ENCODE measurements at regions of chr10 and their contacts with region 1.

Region 1: GRCh38 chr10:26334932-26335573 is 103.1 kb upstream of the APBB1IP start:
- DNase-seq: peak; percentile 81
- H3K4me3 ChIP-seq: no peak overlapping the region
- H3K27ac ChIP-seq: no peak overlapping the region
- H3K4me1 ChIP-seq: no peaks in the 10 kb centered on the region
- H3K27me3 ChIP-seq: no peaks in the 10 kb centered on the region
- CTCF ChIP-seq: peak; percentile 87

Region 2: GRCh38 chr10:25036381-25036780 is 1298.7 kb before region 1 on chr10:
- CTCF ChIA-PET with region 1: no interaction called
- POLR2A ChIA-PET with region 1: no interaction called
- intact Hi-C with region 1: no loop called
- DNase-seq: no peak
- H3K4me3 ChIP-seq: no peak overlapping the region
- H3K27ac ChIP-seq: no peak overlapping the region
- H3K4me1 ChIP-seq: no peaks in the 10 kb centered on the region
- H3K27me3 ChIP-seq: no peaks in the 10 kb centered on the region
- CTCF ChIP-seq: no peak

Region 3: GRCh38 chr10:26725837-26726727 is 391.0 kb after region 1 on chr10:
- CTCF ChIA-PET with region 1: no interaction called
- POLR2A ChIA-PET with region 1: no interaction called
- intact Hi-C with region 1: loop called (anchors 5 kb)
- DNase-seq: peak; percentile 71
- H3K4me3 ChIP-seq: no peak overlapping the region
- H3K27ac ChIP-seq: no peak overlapping the region
- H3K4me1 ChIP-seq: no peaks in the 10 kb centered on the region
- H3K27me3 ChIP-seq: no peaks in the 10 kb centered on the region
- CTCF ChIP-seq: peak; percentile 90

Region 4: GRCh38 chr10:26881600-26882331 is 546.7 kb after region 1 on chr10:
- CTCF ChIA-PET with region 1: no interaction called
- POLR2A ChIA-PET with region 1: no interaction called
- intact Hi-C with region 1: loop called (anchors 2 kb)
- DNase-seq: peak; percentile 81
- H3K4me3 ChIP-seq: peak overlapping the region; percentile 17
- H3K27ac ChIP-seq: no peak overlapping the region
- H3K4me1 ChIP-seq: no peaks in the 10 kb centered on the region
- H3K27me3 ChIP-seq: no peaks in the 10 kb centered on the region
- CTCF ChIP-seq: peak; percentile 77

Region 5: DNA sequence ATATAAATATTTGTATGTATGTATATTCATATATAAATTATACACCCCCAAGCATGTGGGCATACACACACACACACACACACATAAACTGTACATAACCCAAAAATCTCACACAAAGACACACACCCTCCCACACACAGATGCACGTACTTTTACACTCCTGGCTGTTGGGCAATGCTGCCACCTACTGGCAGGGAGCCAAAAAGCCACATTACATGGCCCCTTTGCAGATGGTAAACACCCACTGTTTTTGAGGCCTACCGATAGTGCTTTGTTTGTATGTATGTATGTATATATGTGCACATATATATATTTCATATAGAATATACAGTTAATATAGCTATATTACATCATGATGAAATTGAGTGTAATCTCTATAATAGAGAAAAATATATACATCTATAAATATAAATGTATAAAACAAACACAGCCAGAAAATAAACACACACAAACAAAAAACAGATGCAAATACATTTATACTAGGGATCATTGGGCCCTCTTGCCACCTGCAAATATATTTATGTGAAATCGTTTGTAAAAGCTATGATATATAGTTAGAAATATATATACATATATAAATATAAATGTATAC is 1025.6 kb after region 1 on chr10:
- CTCF ChIA-PET with region 1: no interaction called
- POLR2A ChIA-PET with region 1: no interaction called
- intact Hi-C with region 1: loop called (anchors 1 kb)
- DNase-seq: peak; percentile 89
- H3K4me3 ChIP-seq: no peak overlapping the region
- H3K27ac ChIP-seq: no peak overlapping the region
- H3K4me1 ChIP-seq: no peaks in the 10 kb centered on the region
- H3K27me3 ChIP-seq: no peaks in the 10 kb centered on the region
- CTCF ChIP-seq: peak; percentile 92

Measured in A673 (cell line).